ENCODE measurements at regions of chr6 and their contacts with region 1.

Region 1: DNA sequence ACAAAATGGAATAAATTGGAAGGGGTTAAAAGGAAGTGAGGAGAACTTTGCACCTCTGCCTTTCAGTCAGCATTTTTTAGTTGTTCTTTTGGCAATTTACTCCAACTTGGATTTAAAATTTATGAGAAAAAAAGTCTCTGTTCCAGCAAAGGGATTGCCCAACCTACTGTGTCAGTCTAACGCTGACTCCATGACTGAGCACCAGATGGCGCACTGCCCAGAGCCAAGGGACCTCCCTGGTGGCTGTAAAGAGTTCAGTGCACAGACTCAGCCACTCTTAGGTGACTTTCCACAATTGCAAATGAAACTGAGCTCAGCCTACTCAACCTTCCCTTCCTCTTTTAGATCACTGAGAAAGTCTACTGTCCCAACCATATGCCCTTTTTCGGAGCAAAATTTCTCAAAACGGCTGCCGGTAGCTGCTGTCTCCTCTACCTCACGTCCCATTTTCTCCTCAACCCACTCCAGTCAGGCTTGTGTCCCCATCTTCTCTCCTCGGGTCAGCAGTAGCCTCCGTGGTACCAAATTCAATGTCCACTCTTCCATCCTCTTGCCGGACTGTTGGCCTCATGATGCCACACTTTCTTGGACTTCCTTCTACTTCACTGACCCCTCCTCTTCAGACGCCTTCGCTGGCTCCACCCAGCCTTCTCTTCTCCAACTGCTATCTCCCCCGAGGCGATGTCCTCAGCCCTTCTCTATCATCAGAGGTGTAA is 38.7 kb downstream of the GSTA2 start:
- DNase-seq: peak; percentile 78
- CTCF ChIP-seq: peak; percentile 90

Region 2: DNA sequence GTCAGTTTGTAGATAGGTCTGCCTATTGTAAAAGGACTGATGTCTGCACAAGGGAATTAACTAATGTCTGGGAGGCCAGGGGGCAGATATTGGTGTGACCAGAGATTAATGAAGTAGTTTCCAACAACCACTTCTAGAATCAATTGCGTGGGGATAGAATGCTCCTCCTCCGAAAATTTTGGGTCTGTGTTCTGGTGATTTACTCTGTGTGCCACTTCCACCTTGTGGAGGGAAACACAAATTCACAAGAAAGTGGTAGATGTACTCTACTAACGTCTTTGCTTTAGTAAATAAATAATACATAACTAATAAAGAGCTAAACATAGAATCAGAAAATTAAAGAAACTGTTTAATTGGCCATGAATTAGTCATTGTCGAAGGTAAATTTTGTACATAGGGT is 28.1 kb before region 1 on chr6:
- CTCF ChIA-PET with region 1: interaction called, 10 read pairs
- POLR2A ChIA-PET with region 1: no interaction called
- DNase-seq: no peak
- CTCF ChIP-seq: no peak

Region 3: GRCh38 chr6:52706001-52706400 is 18.6 kb before region 1 on chr6:
- CTCF ChIA-PET with region 1: interaction called, 11 read pairs
- POLR2A ChIA-PET with region 1: no interaction called
- DNase-seq: no peak
- CTCF ChIP-seq: no peak

Region 4: DNA sequence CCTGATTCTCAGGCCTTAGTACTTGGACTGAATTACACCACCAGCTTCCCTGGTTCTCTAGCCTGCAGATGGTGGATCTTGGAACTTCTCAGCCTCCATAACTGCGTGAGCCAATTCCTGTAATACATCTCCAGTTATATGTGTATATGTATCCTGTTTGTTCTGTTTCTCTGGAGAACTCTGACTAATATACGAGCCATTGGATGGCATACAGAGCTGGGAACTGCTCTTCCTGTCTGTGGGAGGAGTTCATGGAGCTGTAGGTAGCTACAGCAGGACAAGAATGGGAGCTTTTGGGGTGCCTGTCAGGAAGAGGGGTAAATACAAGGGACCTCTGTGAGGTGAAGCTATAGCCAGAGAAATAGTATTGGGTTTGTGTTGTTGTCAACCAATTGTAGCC is 12.4 kb before region 1 on chr6:
- CTCF ChIA-PET with region 1: interaction called, 14 read pairs
- POLR2A ChIA-PET with region 1: no interaction called
- DNase-seq: no peak
- CTCF ChIP-seq: no peak

Measured in GM10248 (cell line).